ENCODE measurements at regions of chr10 and their contacts with region 1.

Region 1: DNA sequence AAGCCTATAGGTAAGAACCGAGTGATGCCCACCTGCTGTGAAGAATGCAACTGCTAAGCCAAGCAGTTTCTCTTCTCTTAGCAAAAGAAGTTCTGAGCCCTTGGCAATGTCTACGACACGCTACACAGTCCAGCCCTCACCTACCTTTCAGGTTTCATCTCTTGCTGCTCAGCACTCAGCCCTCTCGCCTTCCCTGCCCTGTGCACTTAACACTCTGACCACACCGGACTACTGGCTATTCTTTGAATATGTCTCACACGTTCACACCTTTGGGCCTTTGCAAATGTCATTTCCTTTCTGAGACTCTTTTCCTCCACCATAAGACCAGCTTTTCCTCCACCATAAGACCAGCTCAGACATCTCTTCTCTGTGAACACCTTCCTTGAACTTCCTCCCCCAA is 67.0 kb upstream of the ITGB1 start:
- ATAC-seq: no peak
- H3K4me3 ChIP-seq: no peak overlapping the region
- H3K27ac ChIP-seq: no peak overlapping the region
- H3K4me1 ChIP-seq: peaks cover 7 to 14% of the 10 kb centered on the region in 2 donors

Region 2: DNA sequence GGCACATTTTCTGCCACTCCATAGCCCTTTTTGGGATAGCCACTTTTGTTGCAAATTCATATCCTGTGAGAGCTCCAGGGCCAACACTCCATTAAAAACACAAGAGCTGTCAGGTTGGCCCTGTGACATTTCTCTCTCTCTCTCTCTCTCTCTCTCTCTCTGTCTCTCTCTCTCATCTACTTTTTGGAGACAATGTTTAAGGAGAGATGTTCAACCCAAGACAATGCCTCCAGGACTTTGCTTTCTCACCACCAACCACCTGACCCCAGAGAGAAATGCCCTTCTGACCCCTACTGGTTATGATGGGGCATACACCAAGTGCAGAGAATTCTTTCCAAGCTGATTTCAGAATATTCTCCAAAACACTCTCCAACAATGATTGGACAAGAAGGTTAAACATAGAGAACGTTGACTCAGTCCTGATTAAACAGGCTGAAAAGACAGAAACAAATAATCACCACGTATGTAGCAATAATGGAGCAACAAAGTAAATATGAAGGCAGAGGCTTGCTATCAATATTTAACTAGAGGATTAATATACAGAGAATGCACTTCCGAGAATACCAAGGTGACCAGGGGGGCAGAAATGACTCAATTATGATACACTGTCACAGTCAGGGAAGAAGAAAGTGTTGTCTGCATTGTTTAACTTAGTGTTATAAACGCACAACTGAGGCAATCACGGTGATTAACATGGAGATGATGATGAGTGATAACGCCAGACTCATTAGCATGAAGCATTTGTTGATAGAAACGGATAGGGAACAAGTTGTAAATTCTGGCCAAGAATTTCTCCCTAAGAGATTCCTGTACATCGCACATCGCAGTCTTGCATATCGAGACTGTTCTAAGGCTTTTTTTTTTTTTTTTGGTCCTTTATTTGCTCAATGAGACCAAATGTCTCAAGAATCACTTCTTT is 130.9 kb after region 1 on chr10:
- in situ Hi-C with region 1: loop called in 1 of 9 experiments (anchors 10 kb)
- ATAC-seq: peak in 6 of 8 experiments; percentile 15 to 96 (median 80)
- H3K4me3 ChIP-seq: no peak overlapping the region
- H3K27ac ChIP-seq: no peak overlapping the region
- H3K4me1 ChIP-seq: no peaks in the 10 kb centered on the region

Region 3: DNA sequence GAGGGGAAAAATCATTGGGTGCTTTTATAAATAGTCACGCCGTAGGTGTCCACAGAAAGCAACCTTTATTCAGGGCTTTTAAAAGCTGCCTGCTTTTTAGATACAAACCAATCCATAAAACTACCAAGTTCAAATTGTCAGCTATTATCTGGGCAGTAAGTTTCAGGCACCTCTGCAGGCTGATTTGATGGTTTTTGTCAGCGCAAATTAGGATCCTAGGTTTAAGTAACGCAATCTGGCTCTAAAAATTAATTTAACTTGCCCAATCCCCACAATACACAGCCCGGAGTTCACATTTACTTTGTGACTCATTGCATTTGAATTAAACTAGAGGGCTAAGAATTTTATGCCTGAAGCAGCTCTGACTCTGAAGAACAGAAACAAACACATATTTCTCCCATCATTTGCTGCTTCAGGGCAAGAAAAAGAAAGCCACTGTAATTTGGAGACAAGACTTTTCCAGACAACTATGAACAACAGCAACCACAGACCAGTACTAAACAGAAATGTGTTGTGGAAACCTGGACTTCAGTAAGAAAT is 266.1 kb after region 1 on chr10:
- in situ Hi-C with region 1: no loop called
- ATAC-seq: peak; percentile 21 to 94 (median 48)
- H3K4me3 ChIP-seq: no peak overlapping the region
- H3K27ac ChIP-seq: peak overlapping the region in 1 of 2 donors; percentile 6
- H3K4me1 ChIP-seq: peaks cover 26 to 48% of the 10 kb centered on the region in 2 donors